ENCODE measurements at regions of chr6 and their contacts with region 1.

Region 1: DNA sequence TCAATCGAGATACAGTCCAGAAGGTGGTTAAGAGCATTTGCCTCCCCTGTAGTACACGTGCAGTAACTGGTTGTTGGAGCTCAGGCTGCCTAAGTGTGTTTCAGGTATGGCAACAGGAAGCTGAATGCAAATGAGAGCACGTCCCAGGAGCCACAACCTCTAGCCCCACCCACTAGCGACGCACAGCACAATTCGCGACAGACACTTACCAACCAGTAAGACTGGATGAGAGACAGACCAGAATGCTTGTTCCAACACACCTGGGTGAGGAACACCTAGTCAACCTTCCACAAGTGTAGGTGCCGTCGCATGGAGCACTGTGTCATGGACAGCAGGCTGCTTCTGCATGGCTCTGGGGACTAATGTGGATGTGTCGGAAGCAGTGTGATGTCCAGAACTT is 7.2 kb upstream of the SERPINB1 start:
- DNase-seq: no peak
- H3K4me3 ChIP-seq: no peak overlapping the region
- H3K27ac ChIP-seq: no peak overlapping the region
- H3K4me1 ChIP-seq: peaks cover 31% of the 10 kb centered on the region
- H3K27me3 ChIP-seq: no peaks in the 10 kb centered on the region
- CTCF ChIP-seq: no peak
- POLR2A ChIP-seq: no peak

Region 2: GRCh38 chr6:2783188-2783963 is 65.5 kb before region 1 on chr6:
- CTCF ChIA-PET with region 1: interaction called, 262 read pairs
- POLR2A ChIA-PET with region 1: no interaction called
- dilution Hi-C with region 1: no loop called
- intact Hi-C with region 1: no loop called
- DNase-seq: peak; percentile 94
- H3K4me3 ChIP-seq: peak overlapping the region in 1 of 3 experiments; percentile 8
- H3K27ac ChIP-seq: peak overlapping the region; percentile 73
- H3K4me1 ChIP-seq: peaks cover 23% of the 10 kb centered on the region
- H3K27me3 ChIP-seq: no peaks in the 10 kb centered on the region
- CTCF ChIP-seq: peak in 1 of 2 donors; percentile 35
- POLR2A ChIP-seq: no peak

Region 3: DNA sequence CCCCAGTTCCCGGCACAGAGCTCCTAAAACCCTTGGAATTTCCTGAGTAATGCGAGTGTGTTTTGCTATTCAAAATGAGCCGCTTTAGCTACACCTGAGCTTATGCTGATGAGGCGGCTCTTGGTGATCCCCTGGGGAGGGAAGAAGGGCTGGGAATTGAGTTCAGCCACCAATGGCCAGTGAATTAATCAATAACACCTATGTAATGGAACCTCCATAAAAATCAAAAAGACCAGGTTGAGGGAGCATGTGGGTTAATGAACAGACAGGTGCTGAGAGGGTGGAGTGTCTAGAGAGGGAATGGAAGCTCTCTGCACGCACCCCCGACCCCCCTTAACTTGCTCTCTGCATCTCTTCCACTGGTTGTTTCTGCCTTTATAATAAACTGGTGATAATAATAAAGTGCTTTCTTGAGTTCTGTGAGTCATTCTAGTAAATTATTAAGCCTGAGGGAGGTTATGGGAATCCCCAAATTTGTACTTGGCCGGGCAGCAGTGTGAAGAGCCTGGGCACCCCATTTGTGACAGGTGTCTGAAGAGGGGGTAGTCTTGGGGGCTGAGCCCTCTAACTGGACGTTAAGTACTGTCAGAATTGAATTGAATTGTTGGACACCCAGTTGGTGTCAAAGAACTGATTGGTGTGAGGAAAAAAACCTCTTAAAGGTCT is 17.5 kb after region 1 on chr6:
- CTCF ChIA-PET with region 1: interaction called, 14 read pairs
- POLR2A ChIA-PET with region 1: interaction called, 4 read pairs
- dilution Hi-C with region 1: no loop called
- intact Hi-C with region 1: no loop called
- DNase-seq: peak; percentile 36
- H3K4me3 ChIP-seq: no peak overlapping the region
- H3K27ac ChIP-seq: peak overlapping the region; percentile 65
- H3K4me1 ChIP-seq: peaks cover 12% of the 10 kb centered on the region
- H3K27me3 ChIP-seq: no peaks in the 10 kb centered on the region
- CTCF ChIP-seq: no peak
- POLR2A ChIP-seq: no peak

Region 4: DNA sequence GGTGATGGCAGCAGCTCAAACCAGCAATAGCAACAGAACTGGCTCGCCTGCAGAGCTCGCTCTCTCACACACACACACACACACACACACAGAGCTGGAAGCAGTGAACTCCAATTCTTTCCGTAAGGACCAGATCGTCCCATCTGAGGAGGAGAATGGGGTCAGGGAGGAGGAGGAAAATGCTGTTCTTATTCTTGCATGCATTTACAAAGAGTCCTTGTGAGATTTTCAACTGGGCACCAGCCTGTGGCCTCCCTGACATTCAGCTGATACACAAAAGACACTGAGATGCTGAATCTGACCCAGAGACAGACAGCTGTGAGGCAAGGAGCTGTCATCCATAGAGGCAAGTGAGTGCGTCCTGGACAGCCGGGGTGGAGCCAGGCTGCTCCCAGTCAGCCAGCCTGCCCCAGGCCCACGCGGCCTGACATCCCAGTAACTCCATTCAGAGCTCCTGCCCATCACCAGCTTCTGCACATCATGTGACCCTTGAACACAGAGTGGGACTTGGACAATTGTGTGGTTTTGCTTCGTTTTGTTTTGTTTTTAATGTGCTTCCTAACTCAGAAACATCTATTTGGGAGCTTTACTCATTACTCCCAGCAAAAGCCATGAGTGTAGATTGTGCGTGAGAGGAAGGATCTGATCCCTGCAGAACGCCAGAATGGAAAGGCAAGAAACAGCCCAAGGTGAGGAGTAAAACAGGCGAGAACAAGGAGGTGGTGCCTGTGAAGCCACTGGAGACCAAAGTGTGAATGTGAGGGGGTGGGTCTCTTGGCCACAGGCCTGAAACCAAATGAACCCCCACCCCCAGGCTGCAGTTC is 52.2 kb after region 1 on chr6:
- CTCF ChIA-PET with region 1: interaction called, 15 read pairs
- POLR2A ChIA-PET with region 1: interaction called, 7 read pairs
- dilution Hi-C with region 1: no loop called
- intact Hi-C with region 1: loop called (anchors 1 kb)
- DNase-seq: peak; percentile 41
- H3K4me3 ChIP-seq: peak overlapping the region; percentile 22 to 91 (median 66)
- H3K27ac ChIP-seq: no peak overlapping the region
- H3K4me1 ChIP-seq: peaks cover 15% of the 10 kb centered on the region
- H3K27me3 ChIP-seq: no peaks in the 10 kb centered on the region
- CTCF ChIP-seq: no peak
- POLR2A ChIP-seq: no peak

Region 5: GRCh38 chr6:2931970-2932748 is 83.3 kb after region 1 on chr6:
- CTCF ChIA-PET with region 1: interaction called, 185 read pairs
- POLR2A ChIA-PET with region 1: no interaction called
- dilution Hi-C with region 1: no loop called
- intact Hi-C with region 1: loop called (anchors 1 kb)
- DNase-seq: peak; percentile 84
- H3K4me3 ChIP-seq: no peak overlapping the region
- H3K27ac ChIP-seq: no peak overlapping the region
- H3K4me1 ChIP-seq: peaks cover 2% of the 10 kb centered on the region
- H3K27me3 ChIP-seq: no peaks in the 10 kb centered on the region
- CTCF ChIP-seq: peak; percentile 93 to 96
- POLR2A ChIP-seq: no peak

Region 6: DNA sequence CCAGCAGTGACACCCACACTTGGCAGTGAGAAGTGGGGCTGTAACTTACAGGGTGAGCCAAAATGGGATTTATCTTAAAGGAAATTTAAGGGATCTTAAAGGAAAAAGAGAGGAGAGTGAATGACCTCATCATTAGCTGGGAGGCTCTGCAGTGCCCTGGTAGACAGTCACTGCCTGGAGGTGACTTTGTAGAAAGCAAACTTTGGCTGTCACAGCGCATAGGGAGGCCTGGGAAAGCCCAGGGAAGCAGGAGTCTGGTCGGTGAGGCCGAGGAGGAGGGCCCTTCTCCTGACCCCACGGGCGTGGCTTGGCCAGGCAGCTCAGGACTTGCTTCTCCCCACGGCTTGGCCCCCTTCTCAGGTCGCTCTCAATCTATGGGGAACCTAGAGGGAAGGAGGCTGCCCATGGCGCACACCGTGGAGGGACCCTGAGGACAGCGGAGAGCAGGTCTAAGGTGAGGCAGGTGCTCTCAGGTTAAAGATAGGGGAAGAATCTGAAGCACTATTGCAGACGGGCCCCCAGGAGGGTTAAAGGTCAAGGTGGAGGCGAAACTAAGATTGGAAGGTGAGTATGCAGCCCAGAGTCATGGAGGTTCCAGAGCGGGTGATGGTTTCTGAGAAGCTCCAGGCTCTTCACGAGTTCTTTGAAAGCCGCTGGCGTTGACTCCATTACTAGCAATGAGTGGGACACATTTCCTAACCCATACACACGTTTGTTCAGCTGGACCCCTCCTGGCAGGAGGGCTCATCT is 203.8 kb after region 1 on chr6:
- CTCF ChIA-PET with region 1: interaction called, 3 read pairs
- POLR2A ChIA-PET with region 1: no interaction called
- dilution Hi-C with region 1: no loop called
- intact Hi-C with region 1: loop called (anchors 1 kb)
- DNase-seq: no peak
- H3K4me3 ChIP-seq: no peak overlapping the region
- H3K27ac ChIP-seq: no peak overlapping the region
- H3K4me1 ChIP-seq: peaks cover 9% of the 10 kb centered on the region
- H3K27me3 ChIP-seq: peaks cover 3 to 8% of the 10 kb centered on the region in 2 experiments
- CTCF ChIP-seq: no peak
- POLR2A ChIP-seq: no peak

Measured in endothelial cell of umbilical vein (primary cell).